ENCODE measurements at regions of chr1 and their contacts with region 1.

Region 1: DNA sequence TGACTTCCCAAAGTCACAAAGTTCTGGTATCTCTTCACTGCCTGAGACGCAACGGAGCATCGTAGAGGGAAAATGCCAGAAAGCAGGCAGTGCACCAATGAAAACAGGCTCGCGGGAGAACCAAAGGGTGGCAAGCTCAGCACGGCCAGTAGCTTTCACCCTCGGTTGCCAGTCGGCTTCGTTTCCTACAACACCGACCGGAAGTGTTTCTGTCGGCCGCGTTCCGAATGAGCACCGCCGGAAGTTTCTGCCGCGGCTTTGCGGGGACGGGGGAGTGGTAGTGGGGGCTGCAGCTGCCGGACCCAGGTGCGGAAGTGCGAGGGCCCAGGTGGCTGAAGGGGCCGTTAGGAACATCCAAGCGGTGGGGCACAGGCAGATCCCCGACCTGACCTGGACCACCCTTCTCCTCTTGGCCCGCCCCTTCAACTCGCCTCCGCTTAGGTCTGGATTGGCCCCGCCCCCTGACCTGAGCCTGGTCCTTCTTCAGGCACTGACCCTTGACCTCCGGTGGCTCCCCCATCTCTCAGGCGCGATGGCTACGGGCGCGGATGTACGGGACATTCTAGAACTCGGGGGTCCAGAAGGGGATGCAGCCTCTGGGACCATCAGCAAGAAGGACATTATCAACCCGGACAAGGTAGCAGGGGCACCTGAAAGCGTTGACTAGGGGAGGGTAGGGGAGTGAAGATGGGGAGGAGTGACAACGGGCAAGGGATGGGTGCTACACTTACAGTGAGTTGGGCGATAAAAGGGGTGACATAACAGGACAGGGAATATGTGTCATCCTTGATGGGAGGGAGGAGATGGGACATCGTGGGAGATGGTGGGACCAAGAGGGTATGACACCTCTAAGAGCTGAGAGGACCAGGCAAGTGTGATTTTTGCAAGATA is at the start of gene DMAP1:
- DNase-seq: peak; percentile 76 to 95 (median 86)
- ATAC-seq: peak; percentile 91 to 96 (median 94)
- H3K4me3 ChIP-seq: peak within 1 kb of the TSS; percentile 70 to 93 (median 82)
- H3K27ac ChIP-seq: peak within 1 kb of the TSS in 3 of 4 donors; percentile 42 to 60 (median 57)
- H3K4me1 ChIP-seq: peaks cover 6 to 19% (median 6%) of the 10 kb centered on the region in 3 donors
- H3K27me3 ChIP-seq: no peaks in the 10 kb centered on the region
- CTCF ChIP-seq: no peak
- total RNA-seq, gene DMAP1: 18.1 to 30.4 (median 25.8) TPM

Region 2: DNA sequence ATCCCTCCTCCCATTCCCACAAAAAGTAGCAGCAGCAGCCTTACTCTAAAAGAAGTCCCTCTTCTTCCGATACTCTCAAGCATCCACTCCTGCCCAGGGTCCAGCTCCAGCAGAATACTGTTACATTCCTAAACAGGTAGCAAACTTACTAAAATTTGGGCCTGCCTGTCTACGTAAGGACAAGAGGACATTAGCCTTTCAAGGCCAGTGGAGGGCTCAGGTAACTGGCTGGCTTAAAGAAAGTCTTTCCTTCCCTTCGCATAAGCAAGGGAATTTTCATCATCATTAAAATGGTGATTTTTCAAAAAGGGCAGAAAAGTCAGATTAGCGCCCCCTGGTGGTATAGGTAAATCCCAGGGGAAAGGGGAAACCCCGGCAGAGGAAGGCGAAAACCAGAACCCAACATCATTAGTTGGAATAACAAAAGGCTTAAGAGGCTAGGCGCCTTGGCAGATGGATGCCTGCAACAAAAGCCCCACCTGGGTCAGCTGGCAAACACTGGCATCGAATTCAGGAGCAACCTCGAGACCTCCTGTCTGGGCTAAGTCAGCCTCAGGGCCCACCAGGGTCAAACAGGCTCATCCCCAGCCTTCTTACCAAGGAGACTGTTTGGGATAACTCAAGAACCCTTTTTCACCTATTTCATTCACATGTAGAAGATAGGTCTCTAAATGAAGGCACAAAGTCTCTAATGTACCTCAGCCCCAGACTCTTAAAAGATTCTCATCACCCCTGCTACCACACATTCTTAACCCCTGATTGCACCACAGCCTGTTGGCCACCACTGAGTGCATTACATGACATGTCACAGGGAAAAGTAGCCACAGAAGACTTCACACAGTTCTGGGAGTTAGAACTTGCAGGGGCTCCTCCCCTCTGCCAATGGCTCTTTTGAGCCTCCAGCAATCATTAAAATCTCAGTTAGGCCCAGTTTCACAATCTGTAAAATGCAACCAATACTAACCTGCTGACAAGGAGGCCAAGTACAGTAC is 104.9 kb after region 1 on chr1:
- intact Hi-C with region 1: loop called in 1 of 3 experiments (anchors 5 kb)
- DNase-seq: peak in 3 of 6 donors; percentile 23 to 48 (median 36)
- ATAC-seq: peak; percentile 39 to 71 (median 55)
- H3K4me3 ChIP-seq: no peak overlapping the region
- H3K27ac ChIP-seq: no peak overlapping the region
- H3K4me1 ChIP-seq: peaks cover 0 to 8% (median 5%) of the 10 kb centered on the region in 3 donors
- H3K27me3 ChIP-seq: no peaks in the 10 kb centered on the region
- CTCF ChIP-seq: peak; percentile 85 to 86 (median 85)